SK-N-SH (cell line): ENCODE measurements at regions of chr12 and their contacts with region 1.

Region 1: DNA sequence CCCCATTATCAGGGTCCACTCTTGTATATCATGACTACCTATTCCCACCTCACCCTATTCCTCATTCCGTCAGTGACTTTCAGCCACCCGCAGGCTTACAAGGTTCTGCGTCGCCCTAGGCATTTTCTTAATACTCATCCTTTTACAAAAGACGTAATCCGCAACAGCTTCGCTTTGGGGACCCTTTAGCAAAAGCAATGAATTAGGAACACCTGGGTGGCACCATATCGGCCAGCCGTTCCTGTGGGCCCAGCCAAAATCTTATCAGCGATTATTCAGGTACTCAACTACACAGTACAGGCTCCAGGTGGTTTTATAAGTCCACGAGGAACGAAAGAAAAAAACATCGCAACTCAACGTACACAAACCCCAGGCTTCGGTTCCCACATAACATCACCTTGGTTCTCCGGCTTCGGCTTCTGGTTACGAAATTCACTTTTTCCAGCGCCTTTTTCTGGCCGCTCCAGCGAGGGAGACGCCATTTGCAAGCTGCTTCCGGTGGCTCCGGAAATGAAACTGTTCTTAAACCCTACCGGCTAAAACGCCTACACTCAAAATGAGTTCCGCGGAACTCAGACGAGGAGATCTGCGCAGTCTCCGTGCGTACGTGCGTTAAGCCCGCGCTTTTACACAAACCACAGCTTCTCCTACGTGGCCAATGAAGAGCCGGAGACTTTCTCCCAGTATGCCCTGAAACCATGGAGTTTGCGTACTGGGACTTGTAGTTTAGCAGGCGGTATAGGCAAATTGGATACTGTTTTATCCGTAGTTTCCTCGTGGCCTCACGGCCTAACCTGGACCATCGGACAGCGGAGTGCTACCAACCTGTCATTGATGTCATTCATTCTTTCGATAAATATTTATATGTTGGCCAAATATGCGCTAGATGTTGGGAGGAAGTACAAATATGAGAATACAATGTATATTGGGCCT is at the start of gene KRR1:
- DNase-seq: peak; percentile 71
- H3K4me3 ChIP-seq: peak within 1 kb of the TSS; percentile 99
- H3K27ac ChIP-seq: peak within 1 kb of the TSS; percentile 72 to 85
- H3K4me1 ChIP-seq: peaks cover 3 to 7% of the 10 kb centered on the region in 2 experiments; a peak in 2 of 4 replicates
- H3K27me3 ChIP-seq: no peaks in the 10 kb centered on the region
- CTCF ChIP-seq: no peak
- EP300 ChIP-seq: peak in 1 of 2 experiments; percentile 3; a peak in 1 of 4 replicates
- RAD21 ChIP-seq: no peak
- polyA plus RNA-seq, gene KRR1: 13.8 and 16.1 TPM in 2 replicates

Region 2: GRCh38 chr12:76348079-76348901 is 836.9 kb after region 1 on chr12 and contains the start of gene BBS10:
- CTCF ChIA-PET with region 1: interaction called, 3 read pairs
- POLR2A ChIA-PET with region 1: interaction called, 10 read pairs
- DNase-seq: peak; percentile 89
- H3K4me3 ChIP-seq: peak within 1 kb of the TSS; percentile 91 to 94
- H3K27ac ChIP-seq: peak within 1 kb of the TSS; percentile 72 to 97
- H3K4me1 ChIP-seq: peaks cover 8 to 12% of the 10 kb centered on the region in 2 experiments; a peak in 3 of 4 replicates
- H3K27me3 ChIP-seq: no peaks in the 10 kb centered on the region
- CTCF ChIP-seq: peak; percentile 72
- EP300 ChIP-seq: peak in 1 of 2 experiments; percentile 40; a peak in 1 of 4 replicates
- RAD21 ChIP-seq: peak; percentile 32; the same call in 1 of the 2 replicates
- polyA plus RNA-seq, gene BBS10: 5.6 and 9.2 TPM in 2 replicates